Naive thymus-derived CD4-positive, alpha-beta T cell (primary cell): ENCODE measurements at regions of chr6 and their contacts with region 1.

Region 1: GRCh38 chr6:138765896-138766655 is 7.5 kb upstream of the CCDC28A start:
- DNase-seq: peak in 5 of 9 donors; percentile 25 to 42 (median 29)
- ATAC-seq: no peak
- H3K4me3 ChIP-seq: no peak overlapping the region
- H3K4me3 Mint-ChIP-seq: no peak overlapping the region
- H3K27ac ChIP-seq: no peak overlapping the region
- H3K27ac Mint-ChIP-seq: peak overlapping the region in 1 of 9 donors; percentile 26
- H3K4me1 ChIP-seq: no peaks in the 10 kb centered on the region
- H3K4me1 Mint-ChIP-seq: peaks cover 0 to 5% (median 0%) of the 10 kb centered on the region in 7 donors
- H3K27me3 ChIP-seq: no peaks in the 10 kb centered on the region
- H3K27me3 Mint-ChIP-seq: no peaks in the 10 kb centered on the region

Region 2: DNA sequence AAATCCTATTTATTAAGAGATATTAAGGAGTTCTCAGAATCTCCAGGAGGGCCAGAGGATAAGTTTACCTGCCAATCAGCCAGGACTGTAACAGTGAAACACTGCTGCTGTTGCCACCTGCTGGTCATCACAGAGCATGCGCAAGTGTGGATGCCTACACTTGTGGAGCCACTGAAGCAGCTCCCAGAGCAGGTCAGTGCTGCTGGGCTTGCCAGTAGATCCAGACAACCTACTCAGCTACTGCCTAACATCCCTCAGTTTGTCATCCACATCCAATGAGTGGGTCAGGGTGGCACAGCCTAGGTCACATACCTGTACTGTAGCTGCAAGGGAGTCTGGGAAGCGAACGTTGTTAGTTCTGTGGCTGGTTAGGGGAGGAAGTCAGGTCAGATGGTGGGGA is 248.4 kb before region 1 on chr6:
- CTCF ChIA-PET with region 1: no interaction called
- POLR2A ChIA-PET with region 1: no interaction called
- intact Hi-C with region 1: loop called in 1 of 2 experiments (anchors 10 kb)
- DNase-seq: peak; percentile 15 to 63 (median 40)
- ATAC-seq: peak; percentile 80
- H3K4me3 ChIP-seq: no peak overlapping the region
- H3K4me3 Mint-ChIP-seq: no peak overlapping the region
- H3K27ac ChIP-seq: no peak overlapping the region
- H3K27ac Mint-ChIP-seq: no peak overlapping the region
- H3K4me1 ChIP-seq: peaks cover 0 to 13% of the 10 kb centered on the region in 2 donors
- H3K4me1 Mint-ChIP-seq: peaks cover 0 to 23% (median 7%) of the 10 kb centered on the region in 7 donors
- H3K27me3 ChIP-seq: no peaks in the 10 kb centered on the region
- H3K27me3 Mint-ChIP-seq: peaks cover 9 to 17% (median 12%) of the 10 kb centered on the region in 5 donors

Region 3: GRCh38 chr6:138692058-138692977 is 73.8 kb before region 1 on chr6:
- CTCF ChIA-PET with region 1: interaction called, 3 read pairs
- POLR2A ChIA-PET with region 1: interaction called, 3 read pairs
- intact Hi-C with region 1: loop called (anchors 1 kb)
- DNase-seq: peak; percentile 20 to 74 (median 37)
- ATAC-seq: peak; percentile 80
- H3K4me3 ChIP-seq: peak overlapping the region; percentile 22
- H3K4me3 Mint-ChIP-seq: peak overlapping the region; percentile 53 to 88 (median 86)
- H3K27ac ChIP-seq: no peak overlapping the region
- H3K27ac Mint-ChIP-seq: peak overlapping the region in 2 of 9 donors; percentile 49 to 77
- H3K4me1 ChIP-seq: peaks cover 0 to 3% of the 10 kb centered on the region in 2 donors
- H3K4me1 Mint-ChIP-seq: peaks cover 0 to 13% (median 9%) of the 10 kb centered on the region in 7 donors
- H3K27me3 ChIP-seq: peaks cover 0 to 6% of the 10 kb centered on the region in 2 donors
- H3K27me3 Mint-ChIP-seq: peaks cover 23 to 56% (median 46%) of the 10 kb centered on the region in 5 donors